B cell (primary cell): ENCODE measurements at regions of chr5 and their contacts with region 1.

Region 1: DNA sequence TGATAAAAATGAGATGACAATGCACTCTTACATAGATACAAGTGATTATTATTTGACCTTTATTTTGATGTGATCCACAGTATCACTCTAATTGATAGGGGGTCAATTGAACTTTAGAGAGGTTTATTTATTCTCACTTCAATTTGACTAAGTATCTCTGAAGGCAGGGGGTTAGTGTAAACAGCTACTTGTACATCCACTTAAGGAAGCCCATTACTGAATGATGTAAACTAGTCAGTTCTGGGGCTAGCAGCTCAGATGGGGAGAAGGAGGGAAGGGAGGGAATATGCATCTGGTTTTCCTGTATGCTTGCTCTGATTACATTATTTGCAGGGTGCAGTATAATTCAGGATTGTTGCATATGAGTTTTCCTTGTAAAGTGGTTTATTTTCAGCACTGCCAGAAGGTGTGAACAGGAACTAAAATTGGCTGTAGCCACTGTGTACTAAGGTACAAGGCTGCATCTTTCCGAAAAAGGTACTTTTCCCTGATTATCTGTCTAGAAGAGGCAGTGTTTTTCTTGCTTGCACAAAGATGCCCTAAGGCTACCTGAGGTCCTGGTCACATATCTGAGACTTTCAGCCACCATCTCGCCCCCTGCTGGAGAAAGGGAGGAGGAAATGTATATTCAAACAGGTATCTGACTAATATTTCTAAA is 51.2 kb downstream of the MRPS27 start:
- DNase-seq: peak; percentile 52
- ATAC-seq: peak; percentile 41
- H3K4me3 ChIP-seq: no peak overlapping the region
- H3K4me3 Mint-ChIP-seq: no peak overlapping the region
- H3K27ac ChIP-seq: no peak overlapping the region
- H3K27ac Mint-ChIP-seq: no peak overlapping the region
- H3K4me1 ChIP-seq: no peaks in the 10 kb centered on the region
- H3K4me1 Mint-ChIP-seq: peaks cover 9% of the 10 kb centered on the region
- H3K27me3 ChIP-seq: no peaks in the 10 kb centered on the region
- H3K27me3 Mint-ChIP-seq: no peaks in the 10 kb centered on the region
- CTCF ChIP-seq: peak; percentile 77

Region 2: GRCh38 chr5:72138943-72139521 is 129.8 kb before region 1 on chr5:
- CTCF ChIA-PET with region 1: no interaction called
- POLR2A ChIA-PET with region 1: no interaction called
- intact Hi-C with region 1: loop called (anchors 5 kb)
- DNase-seq: no peak
- ATAC-seq: no peak
- H3K4me3 ChIP-seq: no peak overlapping the region
- H3K4me3 Mint-ChIP-seq: no peak overlapping the region
- H3K27ac ChIP-seq: no peak overlapping the region
- H3K27ac Mint-ChIP-seq: no peak overlapping the region
- H3K4me1 ChIP-seq: no peaks in the 10 kb centered on the region
- H3K4me1 Mint-ChIP-seq: no peaks in the 10 kb centered on the region
- H3K27me3 ChIP-seq: peaks cover 0 to 2% (median 0%) of the 10 kb centered on the region in 4 experiments
- H3K27me3 Mint-ChIP-seq: peaks cover 31% of the 10 kb centered on the region
- CTCF ChIP-seq: no peak

Region 3: DNA sequence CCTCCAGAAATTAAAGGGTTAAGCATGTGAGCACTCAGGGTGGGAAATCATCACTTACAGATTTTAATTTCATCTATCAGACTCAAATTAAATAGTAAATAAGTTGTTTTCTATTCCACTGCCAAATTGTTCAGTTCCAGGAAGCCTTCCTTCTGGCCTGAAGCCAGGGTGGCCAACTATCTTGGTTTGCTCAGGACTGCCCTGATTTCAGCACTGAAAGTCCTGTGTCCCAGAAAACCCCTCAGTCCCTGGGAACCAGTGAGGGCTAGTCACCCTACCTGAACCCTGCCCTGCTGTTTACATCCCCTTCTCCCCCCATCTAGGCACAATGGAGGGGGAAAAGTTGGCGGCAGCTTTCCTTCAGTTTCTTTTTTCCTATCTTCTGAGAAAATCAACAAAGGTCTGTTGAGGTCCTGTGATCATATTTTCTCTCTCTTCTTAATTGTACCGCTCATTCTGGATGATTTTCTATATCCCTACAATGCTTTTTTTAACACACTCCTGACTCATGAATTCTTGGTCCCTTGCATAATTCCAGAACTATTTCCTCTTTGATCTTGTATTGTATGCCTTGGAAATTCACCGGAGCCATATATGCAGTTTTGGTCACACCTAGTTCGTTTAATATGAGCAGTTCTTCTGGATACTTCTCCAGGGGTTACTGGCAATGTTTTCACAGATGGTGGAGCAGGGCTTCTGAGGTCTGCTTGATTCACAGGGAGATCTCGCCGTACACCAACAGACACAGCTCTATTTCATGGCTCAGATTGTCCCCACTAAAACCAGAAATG is 57.8 kb before region 1 on chr5:
- CTCF ChIA-PET with region 1: no interaction called
- POLR2A ChIA-PET with region 1: no interaction called
- intact Hi-C with region 1: no loop called
- DNase-seq: no peak
- ATAC-seq: no peak
- H3K4me3 ChIP-seq: no peak overlapping the region
- H3K4me3 Mint-ChIP-seq: no peak overlapping the region
- H3K27ac ChIP-seq: no peak overlapping the region
- H3K27ac Mint-ChIP-seq: no peak overlapping the region
- H3K4me1 ChIP-seq: no peaks in the 10 kb centered on the region
- H3K4me1 Mint-ChIP-seq: no peaks in the 10 kb centered on the region
- H3K27me3 ChIP-seq: no peaks in the 10 kb centered on the region
- H3K27me3 Mint-ChIP-seq: no peaks in the 10 kb centered on the region
- CTCF ChIP-seq: no peak

Region 4: DNA sequence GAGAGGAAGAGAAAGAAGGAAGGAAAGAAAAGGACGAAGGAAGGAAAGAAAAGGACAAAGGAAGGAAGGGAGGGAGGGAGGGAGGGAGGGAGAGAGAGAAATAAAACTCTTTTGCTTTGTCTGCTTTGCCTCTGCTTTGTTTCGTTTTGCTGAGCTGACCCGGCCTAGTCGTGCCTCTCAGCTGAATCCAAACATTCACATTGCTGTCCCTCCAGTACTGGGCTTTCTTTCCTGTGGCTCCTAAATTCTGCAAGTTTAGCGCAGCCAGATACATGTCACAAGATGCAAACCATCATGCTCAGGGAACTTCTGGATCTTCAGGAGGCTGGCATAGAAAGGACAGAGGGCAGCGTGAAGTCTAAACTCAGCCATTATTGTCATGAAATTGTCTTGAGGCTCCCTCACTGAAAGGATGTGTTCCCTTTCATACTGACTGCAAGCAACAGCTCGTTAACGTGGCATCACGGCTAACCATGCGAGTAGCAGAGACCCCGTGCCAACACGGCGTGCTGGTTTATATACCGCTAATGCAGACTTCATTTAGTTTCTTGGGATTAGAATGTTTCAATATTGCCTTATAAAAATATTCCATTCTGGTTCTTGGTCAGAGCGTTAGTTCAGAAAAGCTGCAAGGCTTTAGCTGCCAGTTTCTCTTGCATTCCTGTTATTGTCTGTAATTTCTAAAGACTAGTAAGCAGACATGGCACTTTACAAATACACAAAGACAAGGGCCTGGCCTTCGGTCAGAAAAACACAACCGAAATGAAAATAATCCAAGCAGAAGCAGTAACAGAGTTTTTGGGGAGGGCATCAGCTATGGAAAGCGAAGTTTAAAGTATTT is 998.3 kb after region 1 on chr5:
- CTCF ChIA-PET with region 1: no interaction called
- POLR2A ChIA-PET with region 1: no interaction called
- intact Hi-C with region 1: no loop called
- DNase-seq: no peak
- ATAC-seq: no peak
- H3K4me3 ChIP-seq: no peak overlapping the region
- H3K4me3 Mint-ChIP-seq: no peak overlapping the region
- H3K27ac ChIP-seq: no peak overlapping the region
- H3K27ac Mint-ChIP-seq: no peak overlapping the region
- H3K4me1 ChIP-seq: no peaks in the 10 kb centered on the region
- H3K4me1 Mint-ChIP-seq: no peaks in the 10 kb centered on the region
- H3K27me3 ChIP-seq: peaks cover 0 to 3% (median 1%) of the 10 kb centered on the region in 4 experiments
- H3K27me3 Mint-ChIP-seq: peaks cover 9% of the 10 kb centered on the region
- CTCF ChIP-seq: no peak